ENCODE measurements at regions of chr9 and their contacts with region 1.

Region 1: DNA sequence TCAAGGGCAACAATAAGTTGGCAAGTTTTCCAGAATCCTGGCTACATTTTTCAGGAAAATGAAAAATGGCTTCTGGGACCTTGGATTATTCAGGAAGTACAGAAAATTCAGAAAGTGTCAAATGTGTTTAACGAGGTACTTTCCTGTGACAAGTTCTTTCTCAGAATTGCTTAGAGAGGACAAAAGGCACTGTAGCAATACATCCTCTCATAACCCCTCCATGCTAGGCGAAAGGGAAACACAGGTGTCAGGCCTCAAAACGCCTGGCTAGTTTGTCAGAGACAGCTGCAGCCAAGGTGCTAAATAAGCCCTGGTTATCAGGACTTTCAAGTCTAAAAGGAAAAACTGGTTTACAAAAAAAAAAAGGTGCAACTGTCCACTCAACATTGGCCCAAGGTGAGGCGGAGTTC is 115.2 kb downstream of the GNAQ start:
- DNase-seq: no peak
- ATAC-seq: no peak
- H3K4me3 ChIP-seq: no peak overlapping the region
- H3K27ac ChIP-seq: peak overlapping the region in 3 of 12 donors; percentile 5 to 46 (median 12)
- H3K4me1 ChIP-seq: peaks cover 0 to 43% (median 1%) of the 10 kb centered on the region in 12 donors
- H3K27me3 ChIP-seq: no peaks in the 10 kb centered on the region
- CTCF ChIP-seq: no peak
- POLR2A ChIP-seq: no peak

Region 2: DNA sequence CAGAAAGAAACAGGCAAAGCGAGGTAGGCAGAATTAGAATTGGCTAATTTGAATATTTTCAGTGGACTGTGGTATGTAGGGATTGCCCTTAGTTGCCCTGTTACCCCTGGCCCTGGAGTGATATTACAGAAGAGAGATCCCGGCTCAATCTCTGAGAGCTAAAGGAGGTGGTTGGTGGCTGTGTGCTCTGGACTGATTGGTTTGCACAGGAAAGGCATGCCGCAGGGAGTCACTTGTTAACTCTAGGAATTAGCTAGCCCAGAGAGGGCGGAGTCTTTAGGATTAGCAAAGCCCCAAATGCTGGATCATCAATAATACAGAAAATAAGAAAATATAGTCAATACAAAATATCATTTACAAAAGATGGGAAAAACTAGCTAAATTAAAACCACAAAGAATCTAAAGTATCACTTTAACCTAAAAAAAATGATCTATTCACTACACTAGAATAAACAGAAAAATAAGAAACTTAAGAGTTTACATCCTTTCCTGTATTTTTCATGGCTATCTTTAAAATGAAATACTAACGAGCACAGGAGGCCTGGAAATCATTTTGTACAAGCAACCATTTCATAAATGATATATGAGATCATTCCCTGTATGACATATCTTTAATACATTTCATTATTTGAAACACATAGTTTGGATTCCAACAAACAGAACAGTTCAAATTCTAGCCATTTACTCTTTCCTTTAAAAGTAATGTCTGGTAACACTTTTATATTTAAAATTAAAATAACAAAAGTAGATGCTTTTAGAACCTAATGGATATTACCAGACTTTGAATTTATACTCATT is 44.1 kb after region 1 on chr9:
- intact Hi-C with region 1: loop called in 1 of 10 experiments (anchors 5 kb)
- DNase-seq: no peak
- ATAC-seq: no peak
- H3K4me3 ChIP-seq: no peak overlapping the region
- H3K27ac ChIP-seq: peak overlapping the region in 5 of 12 donors; percentile 1 to 63 (median 27)
- H3K4me1 ChIP-seq: peaks cover 0 to 64% (median 17%) of the 10 kb centered on the region in 12 donors
- H3K27me3 ChIP-seq: no peaks in the 10 kb centered on the region
- CTCF ChIP-seq: no peak
- POLR2A ChIP-seq: no peak

Measured in heart left ventricle (tissue), 16 donors.